ENCODE measurements at regions of chr5 and their contacts with region 1.

Region 1: GRCh38 chr5:56200856-56201666 is 32.1 kb downstream of the ANKRD55 start:
- DNase-seq: peak; percentile 69
- ATAC-seq: peak; percentile 100
- H3K4me3 ChIP-seq: no peak overlapping the region
- H3K27ac ChIP-seq: no peak overlapping the region
- H3K4me1 ChIP-seq: no peaks in the 10 kb centered on the region
- H3K27me3 ChIP-seq: no peaks in the 10 kb centered on the region
- CTCF ChIP-seq: peak; percentile 71 to 97 (median 86)
- POLR2A ChIP-seq: no peak
- RAD21 ChIP-seq: peak; percentile 97

Region 2: DNA sequence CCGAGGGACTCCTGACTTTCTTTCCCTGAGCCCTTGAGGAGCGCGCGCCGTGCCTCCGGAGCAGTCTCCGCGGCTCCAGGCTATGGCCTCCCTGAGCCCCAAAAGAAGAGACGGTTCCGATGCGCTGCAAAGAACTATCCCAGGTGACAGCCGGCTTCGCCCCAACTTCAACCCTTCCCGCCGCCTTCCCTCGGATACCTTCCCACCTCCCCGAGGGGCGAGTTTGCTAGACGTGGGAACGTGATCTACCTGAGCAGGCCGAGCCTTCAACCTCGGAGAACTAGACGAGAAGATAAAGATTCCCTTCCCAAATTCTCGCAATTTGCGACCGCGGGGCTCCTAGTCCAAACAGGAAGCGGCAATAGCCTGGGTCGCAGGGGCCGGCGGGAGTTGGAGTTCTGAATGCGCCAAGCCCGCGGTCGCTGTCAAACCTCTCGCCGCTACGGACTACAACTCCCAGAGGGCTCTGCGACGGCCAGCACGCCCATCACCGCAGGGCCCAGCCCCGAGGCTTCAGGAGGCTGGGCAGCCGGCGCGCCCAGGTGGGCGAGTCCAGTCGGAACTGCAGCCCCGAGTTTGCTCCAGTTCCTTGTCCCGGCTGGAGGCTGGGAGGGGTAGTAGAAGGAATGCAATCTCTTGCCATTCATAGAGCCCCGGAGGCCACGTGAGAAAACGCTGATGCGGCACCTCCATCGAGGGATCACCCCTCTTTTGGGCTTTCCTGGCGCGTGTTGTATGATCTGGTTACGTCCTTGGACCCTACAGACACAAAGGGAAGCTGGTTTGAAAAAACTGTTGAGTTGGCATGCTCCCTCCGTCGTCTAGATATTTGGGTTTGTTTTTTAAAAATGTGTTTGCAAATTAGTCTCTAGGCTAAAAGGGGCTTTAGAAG is 488.8 kb before region 1 on chr5 and contains the start of gene SLC38A9:
- CTCF ChIA-PET with region 1: no interaction called
- POLR2A ChIA-PET with region 1: no interaction called
- RAD21 ChIA-PET with region 1: no interaction called
- intact Hi-C with region 1: loop called (anchors 5 kb)
- DNase-seq: peak; percentile 83
- ATAC-seq: peak; percentile 100
- H3K4me3 ChIP-seq: peak within 1 kb of the TSS; percentile 93 to 97
- H3K27ac ChIP-seq: no peak within 1 kb of the TSS; the same call in 1 of the 2 replicates
- H3K4me1 ChIP-seq: peaks cover 6 to 14% of the 10 kb centered on the region in 2 experiments; a peak in 2 of 4 replicates
- H3K27me3 ChIP-seq: no peaks in the 10 kb centered on the region
- CTCF ChIP-seq: no peak
- POLR2A ChIP-seq: peak; percentile 89
- RAD21 ChIP-seq: no peak
- total RNA-seq, gene SLC38A9: 12.6 TPM

Region 3: GRCh38 chr5:55982957-55983381 is 218.1 kb before region 1 on chr5:
- CTCF ChIA-PET with region 1: interaction called, 3 read pairs
- POLR2A ChIA-PET with region 1: interaction called, 3 read pairs
- RAD21 ChIA-PET with region 1: no interaction called
- intact Hi-C with region 1: loop called (anchors 1 kb)
- DNase-seq: no peak
- ATAC-seq: no peak
- H3K4me3 ChIP-seq: no peak overlapping the region
- H3K27ac ChIP-seq: no peak overlapping the region
- H3K4me1 ChIP-seq: peaks cover 0 to 8% of the 10 kb centered on the region in 2 experiments; a peak in 2 of 4 replicates
- H3K27me3 ChIP-seq: no peaks in the 10 kb centered on the region
- CTCF ChIP-seq: no peak
- POLR2A ChIP-seq: no peak
- RAD21 ChIP-seq: no peak

Region 4: DNA sequence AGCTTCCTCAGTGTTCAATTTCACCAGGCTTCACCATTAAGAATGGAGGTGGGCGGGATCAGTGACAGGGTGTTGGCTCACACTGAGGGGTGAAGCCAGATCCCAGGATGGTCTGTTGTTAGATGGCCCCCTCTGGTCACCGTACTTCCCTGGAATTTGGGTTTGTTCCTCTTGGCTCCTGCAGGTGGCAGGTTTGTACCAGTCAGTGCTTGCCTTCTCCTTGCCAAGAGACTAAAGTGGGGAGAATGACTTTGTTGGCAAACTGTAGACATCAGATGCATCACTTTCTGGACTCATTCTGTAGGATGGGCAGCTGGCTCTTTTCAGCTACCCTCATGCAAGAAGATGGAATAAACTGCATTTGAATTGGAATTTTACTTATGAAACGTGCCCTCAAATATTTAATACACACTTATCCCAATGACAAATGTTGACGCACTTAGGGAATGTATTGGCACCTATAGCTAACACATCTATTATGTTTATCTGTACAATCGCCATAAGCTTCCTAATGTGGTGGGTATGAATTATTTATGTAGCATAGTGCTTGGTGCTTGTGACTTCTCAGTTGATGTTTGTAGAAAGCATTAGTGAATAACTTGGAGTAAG is 63.5 kb after region 1 on chr5:
- CTCF ChIA-PET with region 1: no interaction called
- POLR2A ChIA-PET with region 1: no interaction called
- RAD21 ChIA-PET with region 1: no interaction called
- intact Hi-C with region 1: loop called (anchors 1 kb)
- DNase-seq: peak; percentile 61
- ATAC-seq: peak; percentile 99
- H3K4me3 ChIP-seq: no peak overlapping the region
- H3K27ac ChIP-seq: no peak overlapping the region
- H3K4me1 ChIP-seq: peaks cover 0 to 6% of the 10 kb centered on the region in 2 experiments; a peak in 1 of 4 replicates
- H3K27me3 ChIP-seq: no peaks in the 10 kb centered on the region
- CTCF ChIP-seq: peak; percentile 85 to 86 (median 86)
- POLR2A ChIP-seq: no peak
- RAD21 ChIP-seq: peak; percentile 86